Left lung (tissue), 14 donors: ENCODE measurements at regions of chr4 and their contacts with region 1.

Region 1: DNA sequence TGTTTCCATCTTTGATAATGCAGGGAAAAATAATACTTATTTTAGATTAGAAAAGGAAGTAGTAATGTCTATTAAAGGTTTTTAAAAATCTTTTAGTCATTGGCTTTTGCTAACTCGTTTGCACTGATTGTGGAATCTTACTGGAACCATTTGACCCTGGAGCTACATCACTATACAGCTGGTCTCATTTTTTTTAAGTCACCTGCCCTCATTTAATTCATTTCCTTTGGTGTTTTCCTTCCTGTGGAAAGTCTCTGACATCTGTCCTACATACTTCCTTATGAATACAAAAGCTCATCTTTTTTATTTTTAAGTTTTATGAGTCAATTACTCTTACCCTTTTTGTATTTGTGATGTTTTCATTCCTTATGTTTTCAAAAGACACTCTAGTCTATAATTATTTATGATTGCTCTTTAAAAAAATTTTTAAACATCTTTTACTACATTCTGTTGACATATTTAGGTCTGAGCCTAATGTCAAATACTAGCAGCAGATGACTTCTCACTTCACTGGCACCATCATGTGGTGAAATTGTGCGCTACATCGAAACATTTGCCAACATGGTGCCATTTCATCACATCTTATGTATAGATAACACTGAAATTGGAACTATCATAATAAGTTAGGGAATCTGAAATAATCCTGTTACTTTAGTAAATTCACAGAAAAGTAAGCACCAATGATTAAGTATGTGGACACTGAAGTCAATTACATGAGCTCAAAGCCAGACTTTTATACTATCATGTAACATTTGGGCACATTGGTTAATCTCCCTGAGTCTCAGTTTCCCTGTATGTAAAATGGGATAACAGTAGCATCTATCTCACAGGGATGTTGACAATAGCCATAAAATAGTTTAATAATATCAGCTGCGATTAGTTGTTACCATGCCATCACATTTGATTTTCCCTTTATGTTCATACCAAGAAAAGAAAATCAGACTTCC is 9.4 kb upstream of the MMAA start:
- DNase-seq: peak in 2 of 4 donors; percentile 64 to 77
- ATAC-seq: peak; percentile 89
- H3K4me3 ChIP-seq: no peak overlapping the region
- H3K27ac ChIP-seq: no peak overlapping the region
- H3K4me1 ChIP-seq: peaks cover 0 to 3% of the 10 kb centered on the region in 2 donors
- H3K27me3 ChIP-seq: no peaks in the 10 kb centered on the region
- CTCF ChIP-seq: peak; percentile 64

Region 2: DNA sequence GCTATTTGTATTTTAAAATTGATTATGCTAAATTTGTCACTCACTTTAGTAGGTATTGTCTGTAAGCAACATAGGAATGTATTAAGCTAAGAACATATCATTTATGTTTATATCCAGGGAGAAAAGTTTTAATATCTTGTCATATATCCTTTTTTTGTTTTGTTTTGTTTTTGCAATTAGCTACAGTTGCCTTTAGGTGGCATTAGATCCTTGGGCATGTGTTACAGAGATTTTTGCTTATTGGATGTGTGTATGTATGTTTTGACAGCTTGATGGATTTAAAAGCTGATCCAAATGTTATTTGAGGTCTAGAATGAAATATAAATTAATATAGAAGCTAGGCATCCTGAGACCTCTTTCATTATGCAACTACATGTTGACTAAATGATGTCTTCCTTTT is 393.2 kb before region 1 on chr4:
- intact Hi-C with region 1: loop called in 1 of 2 experiments (anchors 10 kb)
- DNase-seq: peak in 1 of 4 donors; percentile 17
- ATAC-seq: peak; percentile 44
- H3K4me3 ChIP-seq: no peak overlapping the region
- H3K27ac ChIP-seq: no peak overlapping the region
- H3K4me1 ChIP-seq: no peaks in the 10 kb centered on the region
- H3K27me3 ChIP-seq: no peaks in the 10 kb centered on the region
- CTCF ChIP-seq: peak; percentile 6 to 26

Region 3: DNA sequence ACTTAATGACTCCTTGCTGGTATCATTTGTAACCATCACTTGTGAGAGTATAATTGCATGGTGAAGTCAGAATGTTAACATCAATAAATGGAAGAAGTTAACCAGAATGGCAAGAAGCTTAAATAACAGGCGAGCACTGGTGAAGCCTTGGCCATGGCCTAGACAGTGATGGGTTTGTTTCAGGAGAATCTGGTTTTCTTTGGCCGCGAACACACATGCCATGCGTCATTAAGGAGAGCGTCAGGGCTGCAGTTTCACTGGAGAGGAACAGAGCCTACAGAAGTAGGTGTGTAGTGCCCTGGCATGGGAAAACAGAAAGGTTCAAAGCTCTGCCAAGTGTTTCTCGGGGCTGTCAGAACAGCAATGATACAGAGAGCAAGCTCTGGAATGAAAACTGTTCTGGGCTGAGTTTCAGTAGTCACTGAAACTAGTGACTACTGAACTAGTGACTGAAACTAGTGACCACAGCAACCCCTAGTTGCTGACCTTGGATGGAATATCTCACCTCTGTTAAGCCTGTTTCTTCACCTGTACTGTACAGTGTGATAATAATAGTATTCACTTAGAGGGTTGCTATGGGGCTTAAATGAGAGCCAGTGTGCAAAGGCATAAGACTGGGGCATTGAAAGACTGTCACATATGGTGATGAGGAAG is 164.0 kb after region 1 on chr4:
- intact Hi-C with region 1: no loop called
- DNase-seq: no peak
- ATAC-seq: no peak
- H3K4me3 ChIP-seq: no peak overlapping the region
- H3K27ac ChIP-seq: no peak overlapping the region
- H3K4me1 ChIP-seq: peaks cover 0 to 6% of the 10 kb centered on the region in 2 donors
- H3K27me3 ChIP-seq: no peaks in the 10 kb centered on the region
- CTCF ChIP-seq: no peak